ENCODE measurements at regions of chr11 and their contacts with region 1.

Region 1: DNA sequence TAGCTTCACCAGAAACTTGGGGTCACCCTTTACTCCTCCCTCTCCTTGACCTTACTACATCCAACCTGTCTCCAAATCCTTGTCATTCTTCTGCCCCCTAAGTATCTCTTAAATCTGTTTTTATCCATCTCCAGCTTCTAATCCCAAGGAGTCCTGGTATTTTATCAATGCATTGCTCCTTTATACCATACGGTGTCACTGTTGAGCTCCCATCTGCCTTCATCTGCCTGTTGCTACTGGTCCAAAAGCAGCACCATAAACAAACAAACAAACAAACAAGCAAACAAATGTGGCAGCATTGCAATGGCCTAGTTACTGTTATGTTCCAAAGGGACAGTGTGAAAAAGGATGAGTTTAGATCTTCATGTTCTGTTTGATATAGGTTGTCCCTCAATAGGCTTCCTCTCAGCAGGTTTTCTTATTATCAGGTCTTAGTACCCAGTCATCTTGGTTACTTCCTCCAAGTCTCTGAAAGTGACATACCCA is 34.2 kb downstream of the DNHD1 start:
- DNase-seq: peak; percentile 75
- H3K4me3 ChIP-seq: no peak overlapping the region
- H3K27ac ChIP-seq: no peak overlapping the region
- H3K4me1 ChIP-seq: no peaks in the 10 kb centered on the region
- H3K27me3 ChIP-seq: no peaks in the 10 kb centered on the region
- CTCF ChIP-seq: peak; percentile 63 to 70
- POLR2A ChIP-seq: no peak

Region 2: GRCh38 chr11:5831196-5831829 is 700.0 kb before region 1 on chr11:
- CTCF ChIA-PET with region 1: no interaction called
- POLR2A ChIA-PET with region 1: no interaction called
- dilution Hi-C with region 1: no loop called
- intact Hi-C with region 1: no loop called
- DNase-seq: no peak
- H3K4me3 ChIP-seq: no peak overlapping the region
- H3K27ac ChIP-seq: no peak overlapping the region
- H3K4me1 ChIP-seq: no peaks in the 10 kb centered on the region
- H3K27me3 ChIP-seq: no peaks in the 10 kb centered on the region
- CTCF ChIP-seq: no peak
- POLR2A ChIP-seq: no peak

Region 3: DNA sequence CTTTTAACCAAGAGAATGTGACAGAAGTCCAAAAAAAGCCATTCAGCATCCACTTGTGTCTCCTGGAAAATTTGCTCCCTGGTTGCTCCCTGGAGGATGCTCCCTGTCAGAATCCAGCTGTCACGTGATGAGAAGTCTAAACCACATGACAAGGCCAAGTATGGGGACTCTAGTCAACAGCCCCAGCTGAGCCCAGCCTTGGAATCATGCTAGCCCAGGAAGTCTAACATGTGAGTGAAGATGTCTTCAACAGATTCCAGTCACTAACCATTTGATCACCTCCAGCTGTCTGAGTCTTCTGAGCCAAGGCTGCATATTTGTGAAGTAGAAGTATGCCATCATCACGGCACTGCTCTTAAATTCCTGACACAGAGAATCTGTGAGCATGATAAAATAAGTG is 419.6 kb before region 1 on chr11:
- CTCF ChIA-PET with region 1: no interaction called
- POLR2A ChIA-PET with region 1: no interaction called
- dilution Hi-C with region 1: no loop called
- intact Hi-C with region 1: no loop called
- DNase-seq: no peak
- H3K4me3 ChIP-seq: no peak overlapping the region
- H3K27ac ChIP-seq: no peak overlapping the region
- H3K4me1 ChIP-seq: no peaks in the 10 kb centered on the region
- H3K27me3 ChIP-seq: peaks cover 0 to 12% of the 10 kb centered on the region in 2 experiments
- CTCF ChIP-seq: no peak
- POLR2A ChIP-seq: no peak

Region 4: GRCh38 chr11:6544921-6545850 is 13.9 kb after region 1 on chr11:
- CTCF ChIA-PET with region 1: interaction called, 37 read pairs
- POLR2A ChIA-PET with region 1: no interaction called
- dilution Hi-C with region 1: no loop called
- intact Hi-C with region 1: no loop called
- DNase-seq: no peak
- H3K4me3 ChIP-seq: no peak overlapping the region
- H3K27ac ChIP-seq: no peak overlapping the region
- H3K4me1 ChIP-seq: no peaks in the 10 kb centered on the region
- H3K27me3 ChIP-seq: no peaks in the 10 kb centered on the region
- CTCF ChIP-seq: no peak
- POLR2A ChIP-seq: no peak

Region 5: GRCh38 chr11:6576471-6577373 is 45.4 kb after region 1 on chr11:
- CTCF ChIA-PET with region 1: interaction called, 15 read pairs
- POLR2A ChIA-PET with region 1: interaction called, 3 read pairs
- dilution Hi-C with region 1: no loop called
- intact Hi-C with region 1: loop called (anchors 2 kb)
- DNase-seq: peak; percentile 84
- H3K4me3 ChIP-seq: peak overlapping the region in 1 of 3 experiments; percentile 0
- H3K27ac ChIP-seq: peak overlapping the region; percentile 69
- H3K4me1 ChIP-seq: peaks cover 32% of the 10 kb centered on the region
- H3K27me3 ChIP-seq: no peaks in the 10 kb centered on the region
- CTCF ChIP-seq: no peak
- POLR2A ChIP-seq: no peak

Region 6: DNA sequence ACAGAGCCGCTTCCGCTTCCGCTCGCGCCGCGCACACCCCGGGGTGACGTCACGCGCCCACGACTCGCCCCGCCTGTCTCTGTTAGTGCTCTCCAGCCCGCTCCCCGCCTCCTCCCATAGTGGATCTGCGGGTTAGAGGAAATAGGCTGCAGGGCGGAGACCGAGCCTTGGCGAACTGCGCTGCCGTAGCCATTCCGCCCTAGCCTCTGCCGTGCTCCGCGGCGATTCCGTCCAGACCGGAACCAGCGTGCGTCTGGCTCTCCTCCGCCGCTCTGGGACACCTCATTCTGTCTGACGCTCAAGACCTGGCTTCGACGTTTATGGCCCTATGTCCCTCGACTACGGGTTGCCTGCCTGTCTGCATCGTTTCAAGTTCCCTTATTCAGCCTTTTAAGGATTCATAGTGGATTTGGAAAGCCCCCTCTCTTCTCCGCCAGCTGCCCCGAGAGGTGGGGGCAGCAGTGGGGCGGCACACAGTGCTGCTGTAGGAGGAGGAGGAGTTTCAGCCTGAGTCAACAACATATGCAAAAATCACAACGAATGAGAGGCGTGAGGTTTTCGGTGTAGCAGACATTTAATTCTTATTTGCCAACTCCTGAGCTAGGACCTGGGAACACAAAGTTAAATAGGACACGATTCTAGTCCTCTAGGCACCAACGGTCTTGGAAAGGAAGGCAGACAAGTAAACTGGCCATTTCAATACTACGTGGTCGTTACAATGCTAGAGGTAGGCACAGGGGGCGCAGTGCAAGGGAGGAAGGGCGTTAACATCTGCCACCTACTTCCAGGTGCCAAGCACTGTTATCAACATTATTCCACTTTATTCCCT is 81.1 kb after region 1 on chr11 and contains the start of gene TAF10:
- CTCF ChIA-PET with region 1: interaction called, 122 read pairs
- POLR2A ChIA-PET with region 1: no interaction called
- dilution Hi-C with region 1: no loop called
- intact Hi-C with region 1: no loop called
- DNase-seq: peak; percentile 97
- H3K4me3 ChIP-seq: peak within 1 kb of the TSS; percentile 28 to 72 (median 71)
- H3K27ac ChIP-seq: peak within 1 kb of the TSS; percentile 89
- H3K4me1 ChIP-seq: peaks cover 57% of the 10 kb centered on the region
- H3K27me3 ChIP-seq: no peaks in the 10 kb centered on the region
- CTCF ChIP-seq: peak; percentile 41 to 49
- POLR2A ChIP-seq: peak; percentile 92
- total RNA-seq, gene TAF10: 86.2 and 105 TPM in 2 replicates

Region 7: GRCh38 chr11:6667733-6668374 is 136.5 kb after region 1 on chr11:
- CTCF ChIA-PET with region 1: interaction called, 33 read pairs
- POLR2A ChIA-PET with region 1: no interaction called
- dilution Hi-C with region 1: no loop called
- intact Hi-C with region 1: loop called (anchors 1 kb)
- DNase-seq: peak; percentile 34
- H3K4me3 ChIP-seq: no peak overlapping the region
- H3K27ac ChIP-seq: no peak overlapping the region
- H3K4me1 ChIP-seq: no peaks in the 10 kb centered on the region
- H3K27me3 ChIP-seq: no peaks in the 10 kb centered on the region
- CTCF ChIP-seq: peak; percentile 39 to 53
- POLR2A ChIP-seq: no peak

Region 8: GRCh38 chr11:6705905-6706535 is 174.7 kb after region 1 on chr11:
- CTCF ChIA-PET with region 1: interaction called, 101 read pairs
- POLR2A ChIA-PET with region 1: no interaction called
- dilution Hi-C with region 1: no loop called
- intact Hi-C with region 1: loop called (anchors 1 kb)
- DNase-seq: peak; percentile 66
- H3K4me3 ChIP-seq: no peak overlapping the region
- H3K27ac ChIP-seq: no peak overlapping the region
- H3K4me1 ChIP-seq: peaks cover 6% of the 10 kb centered on the region
- H3K27me3 ChIP-seq: no peaks in the 10 kb centered on the region
- CTCF ChIP-seq: peak; percentile 72 to 78
- POLR2A ChIP-seq: no peak

Region 9: GRCh38 chr11:6717426-6717825 is 186.1 kb after region 1 on chr11:
- CTCF ChIA-PET with region 1: no interaction called
- POLR2A ChIA-PET with region 1: no interaction called
- dilution Hi-C with region 1: no loop called
- intact Hi-C with region 1: no loop called
- DNase-seq: no peak
- H3K4me3 ChIP-seq: no peak overlapping the region
- H3K27ac ChIP-seq: no peak overlapping the region
- H3K4me1 ChIP-seq: peaks cover 6% of the 10 kb centered on the region
- H3K27me3 ChIP-seq: peaks cover 3 to 10% of the 10 kb centered on the region in 2 experiments
- CTCF ChIP-seq: no peak
- POLR2A ChIP-seq: no peak

Region 10: GRCh38 chr11:6900327-6900999 is 369.2 kb after region 1 on chr11:
- CTCF ChIA-PET with region 1: no interaction called
- POLR2A ChIA-PET with region 1: no interaction called
- dilution Hi-C with region 1: no loop called
- intact Hi-C with region 1: no loop called
- DNase-seq: no peak
- H3K4me3 ChIP-seq: no peak overlapping the region
- H3K27ac ChIP-seq: no peak overlapping the region
- H3K4me1 ChIP-seq: no peaks in the 10 kb centered on the region
- H3K27me3 ChIP-seq: no peaks in the 10 kb centered on the region
- CTCF ChIP-seq: no peak
- POLR2A ChIP-seq: no peak

Measured in endothelial cell of umbilical vein (primary cell).